Heart left ventricle (tissue), 16 donors: ENCODE measurements at regions of chr11 and their contacts with region 1.

Region 1: DNA sequence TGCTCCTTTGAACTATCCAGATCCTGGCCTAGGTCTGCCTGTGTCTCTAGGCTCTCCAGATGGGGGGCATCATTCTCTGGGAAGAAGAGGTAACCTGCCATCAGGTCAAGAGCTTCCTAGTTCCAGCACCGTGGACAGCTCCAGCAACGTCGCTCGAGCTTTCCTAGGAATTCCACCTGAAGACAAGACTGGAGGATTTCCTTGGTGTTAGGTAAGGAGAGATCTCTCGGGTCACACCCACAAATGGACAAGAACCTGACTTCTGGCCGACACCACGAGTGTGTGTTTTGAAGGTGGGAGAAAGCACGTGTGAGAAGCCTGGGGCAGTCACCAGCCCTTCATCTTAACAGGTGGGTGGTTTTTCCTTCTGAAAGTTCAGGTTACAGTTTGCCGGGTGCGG is 1.2 kb downstream of the PRG3 start:
- DNase-seq: no peak
- ATAC-seq: no peak
- H3K4me3 ChIP-seq: no peak overlapping the region
- H3K27ac ChIP-seq: no peak overlapping the region
- H3K4me1 ChIP-seq: peaks cover 0 to 4% (median 0%) of the 10 kb centered on the region in 12 donors
- H3K27me3 ChIP-seq: peaks cover 0 to 4% (median 0%) of the 10 kb centered on the region in 9 donors
- CTCF ChIP-seq: no peak
- POLR2A ChIP-seq: no peak

Region 2: GRCh38 chr11:57444362-57445121 is 64.8 kb after region 1 on chr11:
- intact Hi-C with region 1: loop called in 1 of 10 experiments (anchors 10 kb)
- DNase-seq: no peak
- ATAC-seq: no peak
- H3K4me3 ChIP-seq: no peak overlapping the region
- H3K27ac ChIP-seq: no peak overlapping the region
- H3K4me1 ChIP-seq: no peaks in the 10 kb centered on the region
- H3K27me3 ChIP-seq: peaks cover 0 to 4% (median 0%) of the 10 kb centered on the region in 9 donors
- CTCF ChIP-seq: no peak
- POLR2A ChIP-seq: no peak